ENCODE measurements at regions of chr16 and their contacts with region 1.

Region 1: GRCh38 chr16:58733671-58734458 is at the start of gene GOT2:
- DNase-seq: peak; percentile 68 to 82
- ATAC-seq: peak; percentile 87 to 88
- H3K4me3 ChIP-seq: peak within 1 kb of the TSS; percentile 79 to 96 (median 90)
- H3K27ac ChIP-seq: peak within 1 kb of the TSS; percentile 85 to 93 (median 92)
- H3K4me1 ChIP-seq: peaks cover 39 to 43% of the 10 kb centered on the region in 2 donors
- H3K27me3 ChIP-seq: no peaks in the 10 kb centered on the region
- CTCF ChIP-seq: peak; percentile 69 to 93 (median 84)
- POLR2A ChIP-seq: peak; percentile 40 to 56
- total RNA-seq, gene GOT2: 135 to 253 (median 195) TPM

Region 2: GRCh38 chr16:58392215-58393137 is 341.4 kb before region 1 on chr16 and contains the start of gene GINS3:
- in situ Hi-C with region 1: no loop called
- intact Hi-C with region 1: loop called (anchors 10 kb)
- DNase-seq: peak; percentile 77 to 84
- ATAC-seq: peak; percentile 95 to 96
- H3K4me3 ChIP-seq: peak within 1 kb of the TSS; percentile 86 to 98 (median 94)
- H3K27ac ChIP-seq: peak within 1 kb of the TSS; percentile 81 to 95 (median 86)
- H3K4me1 ChIP-seq: peaks cover 6 to 7% of the 10 kb centered on the region in 2 donors
- H3K27me3 ChIP-seq: no peaks in the 10 kb centered on the region
- CTCF ChIP-seq: peak in 1 of 5 experiments; percentile 9
- POLR2A ChIP-seq: no peak
- total RNA-seq, gene GINS3: 0.55 to 3.3 (median 1.0) TPM

Region 3: GRCh38 chr16:58661199-58661830 is 72.5 kb before region 1 on chr16:
- in situ Hi-C with region 1: no loop called
- intact Hi-C with region 1: loop called (anchors 2 kb)
- DNase-seq: peak; percentile 58 to 77
- ATAC-seq: peak; percentile 100
- H3K4me3 ChIP-seq: no peak overlapping the region
- H3K27ac ChIP-seq: no peak overlapping the region
- H3K4me1 ChIP-seq: no peaks in the 10 kb centered on the region
- H3K27me3 ChIP-seq: no peaks in the 10 kb centered on the region
- CTCF ChIP-seq: peak in 4 of 5 experiments; percentile 36 to 55 (median 46)
- POLR2A ChIP-seq: no peak

Region 4: GRCh38 chr16:58773870-58774269 is 40.0 kb after region 1 on chr16:
- in situ Hi-C with region 1: no loop called
- intact Hi-C with region 1: no loop called
- DNase-seq: no peak
- ATAC-seq: no peak
- H3K4me3 ChIP-seq: no peak overlapping the region
- H3K27ac ChIP-seq: no peak overlapping the region
- H3K4me1 ChIP-seq: no peaks in the 10 kb centered on the region
- H3K27me3 ChIP-seq: no peaks in the 10 kb centered on the region
- CTCF ChIP-seq: no peak
- POLR2A ChIP-seq: no peak